CD4-positive, alpha-beta memory T cell (primary cell): ENCODE measurements at regions of chr12 and their contacts with region 1.

Region 1: GRCh38 chr12:48903982-48904411 is 21.3 kb downstream of the FKBP11 start:
- DNase-seq: peak; percentile 81 to 89 (median 82)
- H3K4me3 ChIP-seq: peak overlapping the region in 1 of 2 donors; percentile 36
- H3K4me3 Mint-ChIP-seq: peak overlapping the region; percentile 68 to 86 (median 82)
- H3K27ac ChIP-seq: no peak overlapping the region
- H3K27ac Mint-ChIP-seq: peak overlapping the region in 6 of 7 donors; percentile 76 to 92 (median 89)
- H3K4me1 ChIP-seq: peaks cover 6% of the 10 kb centered on the region
- H3K4me1 Mint-ChIP-seq: peaks cover 2 to 13% (median 7%) of the 10 kb centered on the region in 4 donors
- H3K27me3 ChIP-seq: no peaks in the 10 kb centered on the region
- H3K27me3 Mint-ChIP-seq: peaks cover 0 to 4% of the 10 kb centered on the region in 2 donors

Region 2: GRCh38 chr12:48917857-48918537 is 14.0 kb after region 1 on chr12:
- CTCF ChIA-PET with region 1: interaction called, 82 read pairs
- POLR2A ChIA-PET with region 1: interaction called, 5 read pairs
- intact Hi-C with region 1: no loop called
- DNase-seq: peak; percentile 55 to 66 (median 61)
- H3K4me3 ChIP-seq: peak overlapping the region; percentile 44 to 72
- H3K4me3 Mint-ChIP-seq: peak overlapping the region; percentile 91 to 99 (median 94)
- H3K27ac ChIP-seq: peak overlapping the region; percentile 65
- H3K27ac Mint-ChIP-seq: peak overlapping the region; percentile 72 to 97 (median 94)
- H3K4me1 ChIP-seq: peaks cover 50% of the 10 kb centered on the region
- H3K4me1 Mint-ChIP-seq: peaks cover 27 to 54% (median 39%) of the 10 kb centered on the region in 4 donors
- H3K27me3 ChIP-seq: no peaks in the 10 kb centered on the region
- H3K27me3 Mint-ChIP-seq: no peaks in the 10 kb centered on the region